Spleen (tissue), 13 donors: ENCODE measurements at regions of chr21 and their contacts with region 1.

Region 1: DNA sequence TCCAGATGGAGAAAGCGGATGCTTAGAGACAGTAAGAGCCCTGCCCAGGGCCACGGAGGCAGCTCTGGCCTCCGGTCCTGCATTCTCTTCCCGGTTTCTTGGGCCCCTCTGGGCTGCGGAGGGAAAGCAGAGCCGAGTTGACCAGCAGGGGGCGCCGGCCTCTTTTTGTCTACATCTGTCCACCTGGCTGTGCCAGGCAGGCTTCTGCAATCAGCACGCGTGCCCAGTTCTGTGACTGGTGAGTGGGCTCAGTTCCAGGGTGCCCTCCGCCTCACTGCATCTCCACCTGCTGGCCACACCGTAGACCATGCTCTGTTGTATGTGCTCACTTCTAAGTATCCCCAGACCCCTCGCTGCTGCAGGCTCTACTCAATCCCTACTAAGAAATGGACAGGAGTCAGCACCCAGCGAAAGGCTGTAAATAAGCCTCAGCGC is 6.7 kb upstream of the HUNK start:
- DNase-seq: peak; percentile 88
- H3K4me3 ChIP-seq: no peak overlapping the region
- H3K27ac ChIP-seq: no peak overlapping the region
- H3K4me1 ChIP-seq: peaks cover 0 to 7% (median 0%) of the 10 kb centered on the region in 6 donors
- H3K27me3 ChIP-seq: peaks cover 0 to 39% (median 4%) of the 10 kb centered on the region in 7 donors
- CTCF ChIP-seq: peak; percentile 20 to 87 (median 76)
- POLR2A ChIP-seq: no peak

Region 2: GRCh38 chr21:32257962-32258785 is 392.1 kb after region 1 on chr21:
- intact Hi-C with region 1: loop called (anchors 5 kb)
- DNase-seq: no peak
- H3K4me3 ChIP-seq: no peak overlapping the region
- H3K27ac ChIP-seq: no peak overlapping the region
- H3K4me1 ChIP-seq: peaks cover 0 to 6% (median 0%) of the 10 kb centered on the region in 6 donors
- H3K27me3 ChIP-seq: no peaks in the 10 kb centered on the region
- CTCF ChIP-seq: peak in 8 of 11 experiments; percentile 15 to 62 (median 60)
- POLR2A ChIP-seq: no peak